Left lung (tissue), 14 donors: ENCODE measurements at regions of chr4 and their contacts with region 1.

Region 1: DNA sequence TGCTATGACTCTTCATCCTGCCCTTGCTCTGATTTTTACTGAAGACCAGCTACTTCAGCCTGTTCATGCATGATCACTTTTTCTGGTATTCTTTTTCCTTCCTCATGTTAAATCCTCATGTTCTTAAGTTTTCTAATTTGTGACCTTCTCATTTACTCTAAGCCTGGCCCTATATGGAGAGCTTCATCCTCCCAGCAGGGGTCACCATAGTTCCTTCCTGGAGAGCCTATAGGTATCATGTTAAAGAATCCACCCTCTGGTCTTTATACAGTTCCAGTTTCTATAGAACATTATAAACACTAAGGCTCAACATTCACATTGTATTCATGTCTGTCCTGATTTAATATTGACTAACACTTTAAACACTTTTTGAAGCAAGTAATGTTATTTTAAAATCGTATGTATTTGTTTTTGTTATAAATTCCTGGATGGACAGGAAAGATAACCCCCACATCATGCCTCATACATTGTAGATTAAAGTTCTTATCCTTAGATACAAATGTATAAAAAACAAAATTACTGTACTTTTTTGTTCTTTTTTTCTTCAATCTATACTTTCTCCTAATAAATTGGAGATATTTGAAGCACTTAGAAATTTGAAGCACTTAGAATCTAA is 53.8 kb upstream of the OTUD4 start:
- DNase-seq: peak in 2 of 4 donors; percentile 43 to 74
- ATAC-seq: peak; percentile 93
- H3K4me3 ChIP-seq: no peak overlapping the region
- H3K27ac ChIP-seq: no peak overlapping the region
- H3K4me1 ChIP-seq: peaks cover 0 to 6% of the 10 kb centered on the region in 2 donors
- H3K27me3 ChIP-seq: no peaks in the 10 kb centered on the region
- CTCF ChIP-seq: peak; percentile 61 to 63

Region 2: GRCh38 chr4:145097821-145098674 is 136.2 kb before region 1 on chr4 and contains the starts of genes ABCE1 and ANAPC10:
- intact Hi-C with region 1: no loop called
- DNase-seq: peak; percentile 96 to 98 (median 96)
- ATAC-seq: peak; percentile 97
- H3K4me3 ChIP-seq: peak within 1 kb of the TSS; percentile 83 to 88
- H3K27ac ChIP-seq: peak within 1 kb of the TSS; percentile 92 to 95
- H3K4me1 ChIP-seq: peaks cover 18 to 44% of the 10 kb centered on the region in 2 donors
- H3K27me3 ChIP-seq: no peaks in the 10 kb centered on the region
- CTCF ChIP-seq: no peak
- polyA plus RNA-seq, gene ABCE1: 68.8 to 91.9 (median 79.2) TPM
- polyA plus RNA-seq, gene ANAPC10: 26.3 to 31.6 (median 28.8) TPM

Region 3: GRCh38 chr4:145564540-145564939 is 330.3 kb after region 1 on chr4:
- intact Hi-C with region 1: loop called in 1 of 2 experiments (anchors 5 kb)
- DNase-seq: no peak
- ATAC-seq: no peak
- H3K4me3 ChIP-seq: no peak overlapping the region
- H3K27ac ChIP-seq: no peak overlapping the region
- H3K4me1 ChIP-seq: no peaks in the 10 kb centered on the region
- H3K27me3 ChIP-seq: no peaks in the 10 kb centered on the region
- CTCF ChIP-seq: no peak

Region 4: DNA sequence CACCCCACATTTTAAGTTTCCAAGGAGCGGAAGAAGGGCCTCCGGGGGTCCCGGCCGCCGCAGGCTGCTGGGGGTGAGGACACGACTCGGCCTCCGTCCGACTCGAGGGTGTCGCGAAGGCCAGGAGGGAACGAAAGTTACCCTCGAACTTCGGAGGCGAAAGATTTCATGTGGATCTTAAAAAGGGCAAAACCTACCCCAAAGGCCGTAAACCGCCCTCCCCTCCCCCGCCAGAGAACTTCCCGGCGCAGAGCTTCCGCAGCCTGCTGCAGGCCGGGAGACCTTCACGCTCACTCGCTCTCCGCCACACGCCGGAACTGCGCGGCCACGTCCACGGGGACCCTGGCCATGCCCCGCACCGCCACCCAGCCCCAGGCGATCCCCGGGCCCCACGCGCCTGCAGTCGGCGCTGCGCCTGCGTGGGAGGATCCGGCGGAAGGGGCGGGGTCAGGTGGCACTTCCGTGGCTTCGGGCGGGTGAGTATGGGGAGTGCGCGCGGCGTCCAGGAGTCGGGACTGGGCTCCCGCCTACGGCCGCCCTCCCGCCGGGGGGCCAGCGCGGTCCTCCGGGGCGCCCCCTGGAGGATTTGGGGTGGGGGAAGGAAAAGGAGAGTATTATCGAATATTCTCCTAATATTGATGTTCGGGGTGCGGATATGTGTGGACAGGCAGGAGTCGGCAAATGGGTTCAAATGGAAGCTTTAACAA is 384.9 kb after region 1 on chr4 and contains the start of gene MMAA:
- intact Hi-C with region 1: loop called in 1 of 2 experiments (anchors 10 kb)
- DNase-seq: peak; percentile 94 to 99 (median 96)
- ATAC-seq: peak; percentile 99
- H3K4me3 ChIP-seq: peak within 1 kb of the TSS; percentile 72 to 74
- H3K27ac ChIP-seq: peak within 1 kb of the TSS; percentile 93 to 94
- H3K4me1 ChIP-seq: peaks cover 6 to 38% of the 10 kb centered on the region in 2 donors
- H3K27me3 ChIP-seq: no peaks in the 10 kb centered on the region
- CTCF ChIP-seq: peak; percentile 48 to 51
- polyA plus RNA-seq, gene MMAA: 6.5 to 8.7 (median 7.7) TPM